ENCODE measurements at regions of chr16 and their contacts with region 1.

Region 1: GRCh38 chr16:69143116-69143515 is 10.7 kb downstream of the UTP4 start:
- DNase-seq: peak in 1 of 2 experiments; percentile 31
- H3K4me3 ChIP-seq: no peak overlapping the region
- H3K4me1 ChIP-seq: no peaks in the 10 kb centered on the region
- H3K27me3 ChIP-seq: no peaks in the 10 kb centered on the region

Region 2: DNA sequence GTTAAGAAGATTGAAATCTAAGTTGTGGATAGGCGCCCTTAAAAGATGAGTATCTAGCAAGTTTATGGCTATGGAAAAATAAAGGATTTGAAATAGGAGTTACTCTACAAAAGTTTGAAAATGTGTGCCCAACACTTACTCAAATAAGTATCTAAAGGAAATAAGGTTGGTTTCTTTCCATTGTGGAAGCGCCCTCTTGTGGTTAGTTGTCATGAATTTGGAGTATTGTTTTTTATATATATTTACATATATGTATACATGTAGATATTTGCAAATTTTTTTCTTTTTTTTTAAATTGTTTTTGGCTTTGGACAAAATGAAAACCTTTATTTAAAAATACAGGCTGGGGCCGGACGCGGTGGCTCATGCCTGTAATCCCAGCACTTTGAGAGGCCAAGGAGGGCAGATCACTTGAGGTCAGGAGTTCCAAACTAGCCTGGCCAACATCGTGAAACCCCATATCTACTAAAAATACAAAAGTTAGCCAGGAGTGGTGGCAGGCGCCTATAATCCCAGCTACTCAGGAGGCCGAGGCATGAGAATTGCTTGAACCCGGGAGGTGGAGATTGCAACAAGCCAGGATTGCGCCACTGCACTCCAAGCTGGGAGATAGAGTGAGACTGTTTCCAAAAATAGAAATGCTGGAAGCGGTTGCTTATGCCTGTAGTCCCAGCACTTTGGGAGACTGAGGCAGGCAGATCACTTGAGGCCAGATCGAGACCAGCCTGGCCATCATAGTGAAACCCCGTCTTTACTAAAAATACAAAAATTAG is 144.0 kb after region 1 on chr16:
- in situ Hi-C with region 1: loop called (anchors 10 kb)
- DNase-seq: peak; percentile 55 to 56
- H3K4me3 ChIP-seq: no peak overlapping the region
- H3K4me1 ChIP-seq: no peaks in the 10 kb centered on the region
- H3K27me3 ChIP-seq: no peaks in the 10 kb centered on the region

Measured in HAP-1 (cell line).